B cell (primary cell): ENCODE measurements at regions of chr17 and their contacts with region 1.

Region 1: DNA sequence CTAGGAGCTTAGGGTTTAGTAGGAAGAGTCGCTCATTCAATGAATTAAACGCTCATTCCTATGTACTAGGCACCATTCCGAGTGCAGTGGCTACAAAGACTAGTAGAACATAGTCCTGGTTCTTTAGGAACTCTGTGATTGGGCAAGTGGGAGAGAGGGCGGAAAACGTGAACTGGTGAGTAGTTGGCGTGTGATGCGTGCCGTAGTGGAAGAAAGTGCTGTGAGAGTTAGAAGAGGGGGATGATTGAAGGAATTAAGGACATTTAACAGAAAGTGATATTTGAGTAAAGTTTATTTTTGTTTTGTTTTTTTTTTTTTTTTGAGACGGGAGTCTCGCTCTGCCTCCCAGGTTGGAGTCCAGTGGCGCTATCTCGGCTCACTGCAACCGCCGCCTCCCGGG is 7.9 kb upstream of the SLFN14 start:
- DNase-seq: no peak
- ATAC-seq: no peak
- H3K4me3 ChIP-seq: peak overlapping the region; percentile 76 to 98 (median 91)
- H3K4me3 Mint-ChIP-seq: peak overlapping the region; percentile 99
- H3K27ac ChIP-seq: peak overlapping the region in 1 of 2 donors; percentile 84
- H3K27ac Mint-ChIP-seq: peak overlapping the region; percentile 95
- H3K4me1 ChIP-seq: peaks cover 14 to 16% of the 10 kb centered on the region in 2 donors
- H3K4me1 Mint-ChIP-seq: peaks cover 23% of the 10 kb centered on the region
- H3K27me3 ChIP-seq: no peaks in the 10 kb centered on the region
- H3K27me3 Mint-ChIP-seq: peaks cover 2% of the 10 kb centered on the region
- CTCF ChIP-seq: no peak

Region 2: GRCh38 chr17:34961093-34961911 is 607.2 kb before region 1 on chr17 and contains the starts of genes CCT6B and ZNF830:
- CTCF ChIA-PET with region 1: no interaction called
- POLR2A ChIA-PET with region 1: no interaction called
- intact Hi-C with region 1: loop called (anchors 5 kb)
- DNase-seq: peak; percentile 95
- ATAC-seq: peak; percentile 90
- H3K4me3 ChIP-seq: peak within 1 kb of the TSS; percentile 72 to 98 (median 88)
- H3K4me3 Mint-ChIP-seq: peak within 1 kb of the TSS; percentile 99
- H3K27ac ChIP-seq: peak within 1 kb of the TSS; percentile 85 to 92
- H3K27ac Mint-ChIP-seq: peak within 1 kb of the TSS; percentile 99
- H3K4me1 ChIP-seq: peaks cover 13 to 17% of the 10 kb centered on the region in 2 donors
- H3K4me1 Mint-ChIP-seq: peaks cover 25% of the 10 kb centered on the region
- H3K27me3 ChIP-seq: peaks cover 0 to 7% (median 0%) of the 10 kb centered on the region in 4 experiments
- H3K27me3 Mint-ChIP-seq: peaks cover 10% of the 10 kb centered on the region
- CTCF ChIP-seq: no peak
- total RNA-seq, gene CCT6B: 2.6 and 2.8 TPM in 2 replicates
- total RNA-seq, gene ZNF830: 44.6 and 45.4 TPM in 2 replicates

Region 3: GRCh38 chr17:35555695-35556094 is 12.8 kb before region 1 on chr17:
- CTCF ChIA-PET with region 1: no interaction called
- POLR2A ChIA-PET with region 1: interaction called, 16 read pairs
- intact Hi-C with region 1: no loop called
- DNase-seq: no peak
- ATAC-seq: no peak
- H3K4me3 ChIP-seq: no peak overlapping the region
- H3K4me3 Mint-ChIP-seq: no peak overlapping the region
- H3K27ac ChIP-seq: no peak overlapping the region
- H3K27ac Mint-ChIP-seq: no peak overlapping the region
- H3K4me1 ChIP-seq: no peaks in the 10 kb centered on the region
- H3K4me1 Mint-ChIP-seq: no peaks in the 10 kb centered on the region
- H3K27me3 ChIP-seq: peaks cover 0 to 14% (median 0%) of the 10 kb centered on the region in 4 experiments
- H3K27me3 Mint-ChIP-seq: peaks cover 39% of the 10 kb centered on the region
- CTCF ChIP-seq: no peak

Region 4: GRCh38 chr17:35587074-35587971 is 18.8 kb after region 1 on chr17 and contains the start of gene AP2B1:
- CTCF ChIA-PET with region 1: interaction called, 3 read pairs
- POLR2A ChIA-PET with region 1: no interaction called
- intact Hi-C with region 1: loop called (anchors 1 kb)
- DNase-seq: peak; percentile 99
- ATAC-seq: peak; percentile 98
- H3K4me3 ChIP-seq: peak within 1 kb of the TSS; percentile 59 to 100 (median 90)
- H3K4me3 Mint-ChIP-seq: peak within 1 kb of the TSS; percentile 92
- H3K27ac ChIP-seq: peak within 1 kb of the TSS; percentile 83 to 89
- H3K27ac Mint-ChIP-seq: peak within 1 kb of the TSS; percentile 95
- H3K4me1 ChIP-seq: peaks cover 11 to 19% of the 10 kb centered on the region in 2 donors
- H3K4me1 Mint-ChIP-seq: peaks cover 33% of the 10 kb centered on the region
- H3K27me3 ChIP-seq: no peaks in the 10 kb centered on the region
- H3K27me3 Mint-ChIP-seq: peaks cover 7% of the 10 kb centered on the region
- CTCF ChIP-seq: no peak
- total RNA-seq, gene AP2B1: 120 and 123 TPM in 2 replicates

Region 5: GRCh38 chr17:35865412-35866340 is 297.1 kb after region 1 on chr17:
- CTCF ChIA-PET with region 1: no interaction called
- POLR2A ChIA-PET with region 1: no interaction called
- intact Hi-C with region 1: no loop called
- DNase-seq: no peak
- ATAC-seq: no peak
- H3K4me3 ChIP-seq: no peak overlapping the region
- H3K4me3 Mint-ChIP-seq: no peak overlapping the region
- H3K27ac ChIP-seq: no peak overlapping the region
- H3K27ac Mint-ChIP-seq: no peak overlapping the region
- H3K4me1 ChIP-seq: no peaks in the 10 kb centered on the region
- H3K4me1 Mint-ChIP-seq: no peaks in the 10 kb centered on the region
- H3K27me3 ChIP-seq: no peaks in the 10 kb centered on the region
- H3K27me3 Mint-ChIP-seq: no peaks in the 10 kb centered on the region
- CTCF ChIP-seq: no peak